GM12878 (cell line): ENCODE measurements at regions of chr10 and their contacts with region 1.

Region 1: GRCh38 chr10:6050801-6051445 is 11.2 kb downstream of the IL2RA start:
- DNase-seq: peak; percentile 89
- ATAC-seq: peak; percentile 75
- H3K4me3 ChIP-seq: peak overlapping the region; percentile 48; the same call in 1 of the 2 replicates
- H3K27ac ChIP-seq: peak overlapping the region; percentile 77
- H3K4me1 ChIP-seq: peaks cover 53% of the 10 kb centered on the region
- H3K27me3 ChIP-seq: no peaks in the 10 kb centered on the region
- CTCF ChIP-seq: peak; percentile 24 to 52 (median 41); a peak in 4 of 6 replicates
- EP300 ChIP-seq: peak; percentile 94 to 96
- POLR2A ChIP-seq: peak; percentile 67
- RAD21 ChIP-seq: peak; percentile 74

Region 2: DNA sequence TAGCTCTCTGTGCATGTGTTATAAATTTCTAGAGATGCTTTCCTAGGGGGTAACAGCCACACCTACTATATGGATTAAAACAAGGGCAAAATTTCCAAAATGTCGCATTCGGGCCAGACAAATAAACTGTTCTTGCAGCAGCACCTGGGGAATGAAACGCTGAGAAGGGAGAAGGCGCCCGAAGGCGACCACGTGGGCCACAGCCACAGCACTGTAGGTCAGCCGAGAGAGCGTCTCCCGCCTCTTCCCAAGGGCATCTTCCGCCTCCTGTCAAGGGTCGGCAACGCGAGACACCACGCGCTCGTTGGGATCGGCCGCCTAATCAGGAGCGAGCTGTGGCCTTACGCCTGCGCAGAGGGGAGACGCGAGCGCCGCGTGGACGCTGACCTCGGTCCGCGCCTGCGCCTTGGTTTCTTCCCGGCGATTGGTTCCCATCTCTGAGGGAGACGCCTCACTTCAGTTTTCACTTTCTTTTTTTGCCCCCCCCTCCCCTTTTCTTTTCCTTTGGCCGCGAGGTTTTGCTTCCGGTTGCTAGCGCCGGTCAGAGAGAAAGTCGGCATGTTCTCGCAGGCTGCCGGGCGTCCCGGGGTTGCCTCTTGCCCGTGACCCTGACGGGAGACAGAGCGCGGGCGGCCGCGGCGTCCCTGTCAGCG is 366.5 kb before region 1 on chr10 and contains the start of gene TASOR2:
- CTCF ChIA-PET with region 1: no interaction called
- POLR2A ChIA-PET with region 1: no interaction called
- RAD21 ChIA-PET with region 1: no interaction called
- SMC1A ChIA-PET with region 1: no interaction called
- in situ Hi-C with region 1: no loop called
- intact Hi-C with region 1: loop called (anchors 5 kb)
- DNase-seq: peak; percentile 96
- ATAC-seq: peak; percentile 88
- H3K4me3 ChIP-seq: peak within 1 kb of the TSS; percentile 95
- H3K27ac ChIP-seq: peak within 1 kb of the TSS; percentile 90
- H3K4me1 ChIP-seq: peaks cover 6% of the 10 kb centered on the region; the same call in 1 of the 2 replicates
- H3K27me3 ChIP-seq: no peaks in the 10 kb centered on the region
- CTCF ChIP-seq: no peak
- EP300 ChIP-seq: no peak
- POLR2A ChIP-seq: peak; percentile 76
- RAD21 ChIP-seq: no peak
- polyA plus RNA-seq, gene TASOR2: 8.2 to 10.6 TPM

Region 3: DNA sequence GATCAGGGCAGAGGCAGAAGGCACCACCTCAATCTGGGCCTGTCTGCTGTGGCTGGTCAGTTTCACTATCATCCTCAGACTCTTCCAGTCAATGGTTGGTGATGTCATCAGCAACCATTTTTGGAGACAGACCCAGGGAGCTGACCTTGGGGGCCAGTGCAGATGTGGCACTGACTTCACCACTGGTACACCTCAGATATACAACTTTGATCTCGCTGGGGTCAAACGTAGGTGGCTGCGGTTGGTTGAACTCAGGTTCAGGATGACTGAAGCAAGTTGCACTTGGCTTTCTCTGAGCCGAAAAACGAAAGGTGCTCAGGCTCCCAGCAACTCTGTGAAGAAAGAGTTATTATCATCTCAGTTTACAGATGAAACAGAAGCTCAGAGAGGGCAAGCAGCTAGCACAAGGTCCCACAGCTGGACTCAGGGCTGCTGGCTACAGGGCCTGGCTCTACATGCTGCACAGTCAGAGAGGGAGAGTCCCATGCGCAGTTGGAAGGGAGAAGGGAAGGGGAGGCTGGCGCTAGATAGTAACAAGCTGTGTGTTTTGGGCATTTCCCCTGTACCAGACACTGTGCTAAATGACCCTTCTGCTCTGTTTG is 188.5 kb before region 1 on chr10:
- CTCF ChIA-PET with region 1: no interaction called
- POLR2A ChIA-PET with region 1: interaction called, 4 read pairs
- RAD21 ChIA-PET with region 1: interaction called, 5 read pairs
- SMC1A ChIA-PET with region 1: interaction called, 3 read pairs
- in situ Hi-C with region 1: no loop called
- intact Hi-C with region 1: loop called (anchors 5 kb)
- DNase-seq: peak; percentile 94
- ATAC-seq: peak; percentile 96
- H3K4me3 ChIP-seq: peak overlapping the region; percentile 34
- H3K27ac ChIP-seq: peak overlapping the region; percentile 73
- H3K4me1 ChIP-seq: peaks cover 20% of the 10 kb centered on the region
- H3K27me3 ChIP-seq: no peaks in the 10 kb centered on the region
- CTCF ChIP-seq: no peak
- EP300 ChIP-seq: peak; percentile 74 to 88; a peak in 2 of 4 replicates
- POLR2A ChIP-seq: peak; percentile 46; the same call in 1 of the 2 replicates
- RAD21 ChIP-seq: no peak

Region 4: GRCh38 chr10:5977471-5978229 is 73.3 kb before region 1 on chr10 and contains the start of gene IL15RA:
- CTCF ChIA-PET with region 1: interaction called, 9 read pairs
- POLR2A ChIA-PET with region 1: interaction called, 29 read pairs
- RAD21 ChIA-PET with region 1: interaction called, 18 read pairs
- SMC1A ChIA-PET with region 1: interaction called, 8 read pairs
- in situ Hi-C with region 1: no loop called
- intact Hi-C with region 1: loop called (anchors 2 kb)
- DNase-seq: no peak
- ATAC-seq: peak; percentile 78
- H3K4me3 ChIP-seq: peak within 1 kb of the TSS; percentile 95
- H3K27ac ChIP-seq: peak within 1 kb of the TSS; percentile 88
- H3K4me1 ChIP-seq: peaks cover 12% of the 10 kb centered on the region
- H3K27me3 ChIP-seq: no peaks in the 10 kb centered on the region; a peak in 1 of 4 replicates
- CTCF ChIP-seq: peak; percentile 22 to 54 (median 30); a peak in 5 of 6 replicates
- EP300 ChIP-seq: no peak
- POLR2A ChIP-seq: peak; percentile 65
- RAD21 ChIP-seq: peak; percentile 21; the same call in 1 of the 2 replicates
- polyA plus RNA-seq, gene IL15RA: 2.0 to 4.2 TPM

Region 5: DNA sequence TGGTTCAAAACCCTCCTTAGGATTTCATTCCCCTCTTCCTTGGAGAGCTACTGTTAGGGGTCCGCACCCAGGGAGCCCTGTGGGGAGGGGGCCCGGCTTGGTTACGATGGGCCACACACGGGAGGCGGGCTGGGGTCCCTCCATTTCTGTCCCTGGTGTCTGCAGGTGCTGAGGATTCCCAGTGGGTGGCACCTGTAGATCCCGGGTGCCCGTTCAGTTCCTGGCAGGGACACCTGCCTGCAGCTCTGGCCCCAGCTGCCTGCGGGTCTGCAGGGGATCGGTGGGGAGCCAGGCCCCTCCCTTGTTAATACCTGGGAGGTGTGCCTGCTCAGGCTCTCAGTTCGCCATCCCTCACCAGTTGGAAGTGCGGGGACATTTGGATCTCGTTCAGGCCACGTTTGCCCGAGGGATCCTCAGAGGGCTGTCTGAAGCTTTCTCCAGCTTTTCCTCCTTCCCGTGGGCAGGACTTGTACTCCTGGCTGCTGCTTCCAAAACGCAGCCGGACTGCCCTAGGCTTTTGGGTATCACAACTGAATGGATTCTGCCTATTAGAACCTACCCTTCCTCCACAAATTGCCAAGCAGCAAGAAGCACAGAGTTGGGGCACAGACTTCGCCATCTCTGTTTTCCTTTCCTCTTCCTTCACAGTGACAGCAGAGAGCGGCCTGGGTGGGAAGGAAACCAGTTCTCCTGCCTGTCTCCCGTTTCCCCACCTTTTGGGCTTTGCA is 51.3 kb before region 1 on chr10:
- CTCF ChIA-PET with region 1: no interaction called
- POLR2A ChIA-PET with region 1: no interaction called
- RAD21 ChIA-PET with region 1: no interaction called
- SMC1A ChIA-PET with region 1: no interaction called
- in situ Hi-C with region 1: no loop called
- intact Hi-C with region 1: no loop called
- DNase-seq: no peak
- ATAC-seq: no peak
- H3K4me3 ChIP-seq: no peak overlapping the region
- H3K27ac ChIP-seq: no peak overlapping the region
- H3K4me1 ChIP-seq: peaks cover 2% of the 10 kb centered on the region; the same call in 1 of the 2 replicates
- H3K27me3 ChIP-seq: peaks cover 0 to 1% of the 10 kb centered on the region in 2 experiments; a peak in 1 of 4 replicates
- CTCF ChIP-seq: no peak
- EP300 ChIP-seq: no peak
- POLR2A ChIP-seq: no peak
- RAD21 ChIP-seq: no peak

Region 6: DNA sequence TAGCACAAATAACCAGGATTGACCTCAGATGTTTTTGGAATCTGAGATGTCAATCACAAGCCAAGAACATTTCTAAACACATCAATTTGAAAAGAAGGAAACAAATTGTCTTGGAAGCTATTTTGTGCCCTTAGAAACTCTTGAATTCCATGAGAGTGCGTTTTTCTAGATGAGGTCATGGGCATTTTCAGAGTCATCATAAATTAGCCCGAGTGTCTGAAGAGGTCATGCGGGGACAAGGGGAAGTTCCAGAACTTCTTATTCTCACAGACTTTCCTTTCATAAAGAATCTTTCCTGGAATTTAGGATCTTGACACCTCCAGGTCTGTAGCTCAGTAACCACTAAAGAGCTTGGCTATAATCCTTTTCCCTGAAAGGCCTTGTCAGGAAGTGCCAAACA is 17.0 kb before region 1 on chr10:
- CTCF ChIA-PET with region 1: interaction called, 7 read pairs
- POLR2A ChIA-PET with region 1: no interaction called
- RAD21 ChIA-PET with region 1: interaction called, 8 read pairs
- SMC1A ChIA-PET with region 1: interaction called, 15 read pairs
- in situ Hi-C with region 1: no loop called
- intact Hi-C with region 1: no loop called
- DNase-seq: no peak
- ATAC-seq: no peak
- H3K4me3 ChIP-seq: no peak overlapping the region
- H3K27ac ChIP-seq: no peak overlapping the region
- H3K4me1 ChIP-seq: peaks cover 12% of the 10 kb centered on the region; the same call in 1 of the 2 replicates
- H3K27me3 ChIP-seq: no peaks in the 10 kb centered on the region
- CTCF ChIP-seq: no peak
- EP300 ChIP-seq: no peak
- POLR2A ChIP-seq: no peak
- RAD21 ChIP-seq: no peak

Region 7: GRCh38 chr10:6068422-6068821 is 17.5 kb after region 1 on chr10:
- CTCF ChIA-PET with region 1: interaction called, 6 read pairs
- POLR2A ChIA-PET with region 1: interaction called, 6 read pairs
- RAD21 ChIA-PET with region 1: interaction called, 9 read pairs
- SMC1A ChIA-PET with region 1: interaction called, 66 read pairs
- in situ Hi-C with region 1: no loop called
- intact Hi-C with region 1: no loop called
- DNase-seq: no peak
- ATAC-seq: peak; percentile 86
- H3K4me3 ChIP-seq: no peak overlapping the region
- H3K27ac ChIP-seq: no peak overlapping the region
- H3K4me1 ChIP-seq: peaks cover 30% of the 10 kb centered on the region
- H3K27me3 ChIP-seq: no peaks in the 10 kb centered on the region; a peak in 1 of 4 replicates
- CTCF ChIP-seq: no peak
- EP300 ChIP-seq: no peak
- POLR2A ChIP-seq: no peak
- RAD21 ChIP-seq: no peak

Region 8: DNA sequence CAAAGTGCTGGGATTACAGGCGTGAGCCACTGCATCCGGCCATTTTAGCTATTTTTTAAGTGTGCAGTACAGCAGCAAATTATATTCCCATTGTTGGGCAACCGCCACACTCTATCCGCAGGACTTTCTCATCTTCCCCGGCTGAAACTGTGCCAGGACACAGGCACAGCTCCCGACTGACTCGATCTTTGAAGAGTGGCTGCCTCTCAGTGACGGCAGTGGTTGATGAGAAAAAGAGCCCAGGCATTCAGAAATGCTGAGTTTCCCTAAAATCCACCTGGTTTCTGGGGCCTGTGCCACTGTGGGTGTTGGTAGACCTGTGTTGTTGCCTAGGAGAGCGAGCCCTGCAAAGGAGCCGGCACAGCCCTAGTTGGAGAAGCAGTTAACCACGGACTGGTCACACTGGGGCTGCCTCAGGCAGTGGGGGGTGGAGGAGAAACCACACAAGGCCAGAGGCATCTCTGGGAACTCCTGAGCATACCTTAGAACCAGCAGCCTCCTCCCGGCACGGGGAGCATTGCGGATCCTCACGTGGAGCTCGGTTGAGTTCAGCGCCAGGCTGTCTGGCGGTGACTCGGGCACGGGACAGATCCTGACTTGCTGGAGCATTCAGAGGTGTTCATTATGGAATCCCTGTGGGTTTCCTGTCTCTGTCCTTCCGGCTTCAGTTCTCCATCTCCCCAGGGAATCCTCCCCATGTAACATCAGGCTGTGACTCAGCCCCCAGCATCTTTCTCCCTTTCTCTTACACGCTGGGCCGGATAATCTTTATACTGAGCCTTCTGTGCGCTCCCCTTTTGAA is 168.0 kb after region 1 on chr10:
- CTCF ChIA-PET with region 1: no interaction called
- POLR2A ChIA-PET with region 1: no interaction called
- RAD21 ChIA-PET with region 1: no interaction called
- SMC1A ChIA-PET with region 1: no interaction called
- in situ Hi-C with region 1: no loop called
- intact Hi-C with region 1: no loop called
- DNase-seq: no peak
- ATAC-seq: no peak
- H3K4me3 ChIP-seq: no peak overlapping the region
- H3K27ac ChIP-seq: no peak overlapping the region
- H3K4me1 ChIP-seq: no peaks in the 10 kb centered on the region
- H3K27me3 ChIP-seq: no peaks in the 10 kb centered on the region
- CTCF ChIP-seq: no peak
- EP300 ChIP-seq: no peak
- POLR2A ChIP-seq: no peak
- RAD21 ChIP-seq: no peak